Activated naive CD4-positive, alpha-beta T cell treated with anti-CD3 and anti-CD28 coated beads, Interleukin-2, amount 10 ng/mL, durations not matched to agents 7 days and 5 days (primary cell): ENCODE measurements at regions of chr9 and their contacts with region 1.

Region 1: GRCh38 chr9:87324613-87325194 is 173.0 kb upstream of the DAPK1 start:
- DNase-seq: no peak
- H3K4me3 Mint-ChIP-seq: no peak overlapping the region
- H3K27ac Mint-ChIP-seq: no peak overlapping the region
- H3K4me1 Mint-ChIP-seq: no peaks in the 10 kb centered on the region
- H3K27me3 Mint-ChIP-seq: peaks cover 6% of the 10 kb centered on the region

Region 2: DNA sequence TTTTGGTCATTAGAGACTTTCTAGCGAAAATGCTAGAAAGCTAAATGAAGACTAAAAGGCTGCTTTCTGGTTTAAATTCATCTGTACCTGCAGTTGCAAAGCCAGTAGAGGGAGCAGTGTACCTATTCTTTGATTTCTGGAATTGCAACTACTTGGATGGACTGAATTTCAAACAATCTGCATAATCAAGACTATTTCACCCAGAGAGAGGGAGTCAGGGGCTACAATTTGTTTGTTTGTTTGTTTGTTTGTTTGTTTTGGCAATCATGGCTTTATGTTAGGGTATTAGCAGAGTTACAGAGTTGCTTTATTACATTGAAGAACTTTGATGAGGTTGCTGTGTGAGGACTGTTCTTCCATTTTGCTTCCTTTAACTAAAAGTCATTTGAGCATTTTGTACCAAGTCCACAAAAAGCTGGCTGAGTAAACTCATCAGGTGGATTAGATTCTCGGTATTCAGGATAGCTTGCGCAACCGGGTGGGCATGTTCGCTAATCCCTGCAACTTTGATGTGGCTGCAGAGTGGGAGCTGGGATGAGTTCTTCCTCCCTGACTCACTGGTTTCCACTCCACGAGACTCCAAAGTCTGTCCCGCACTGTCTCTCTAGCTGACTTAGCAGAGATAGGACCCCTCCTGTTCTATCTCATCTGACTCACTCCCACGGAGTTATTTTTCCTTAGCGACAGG is 890.5 kb before region 1 on chr9:
- CTCF ChIA-PET with region 1: interaction called, 16 read pairs
- DNase-seq: no peak
- H3K4me3 Mint-ChIP-seq: no peak overlapping the region
- H3K27ac Mint-ChIP-seq: no peak overlapping the region
- H3K4me1 Mint-ChIP-seq: no peaks in the 10 kb centered on the region
- H3K27me3 Mint-ChIP-seq: no peaks in the 10 kb centered on the region

Region 3: DNA sequence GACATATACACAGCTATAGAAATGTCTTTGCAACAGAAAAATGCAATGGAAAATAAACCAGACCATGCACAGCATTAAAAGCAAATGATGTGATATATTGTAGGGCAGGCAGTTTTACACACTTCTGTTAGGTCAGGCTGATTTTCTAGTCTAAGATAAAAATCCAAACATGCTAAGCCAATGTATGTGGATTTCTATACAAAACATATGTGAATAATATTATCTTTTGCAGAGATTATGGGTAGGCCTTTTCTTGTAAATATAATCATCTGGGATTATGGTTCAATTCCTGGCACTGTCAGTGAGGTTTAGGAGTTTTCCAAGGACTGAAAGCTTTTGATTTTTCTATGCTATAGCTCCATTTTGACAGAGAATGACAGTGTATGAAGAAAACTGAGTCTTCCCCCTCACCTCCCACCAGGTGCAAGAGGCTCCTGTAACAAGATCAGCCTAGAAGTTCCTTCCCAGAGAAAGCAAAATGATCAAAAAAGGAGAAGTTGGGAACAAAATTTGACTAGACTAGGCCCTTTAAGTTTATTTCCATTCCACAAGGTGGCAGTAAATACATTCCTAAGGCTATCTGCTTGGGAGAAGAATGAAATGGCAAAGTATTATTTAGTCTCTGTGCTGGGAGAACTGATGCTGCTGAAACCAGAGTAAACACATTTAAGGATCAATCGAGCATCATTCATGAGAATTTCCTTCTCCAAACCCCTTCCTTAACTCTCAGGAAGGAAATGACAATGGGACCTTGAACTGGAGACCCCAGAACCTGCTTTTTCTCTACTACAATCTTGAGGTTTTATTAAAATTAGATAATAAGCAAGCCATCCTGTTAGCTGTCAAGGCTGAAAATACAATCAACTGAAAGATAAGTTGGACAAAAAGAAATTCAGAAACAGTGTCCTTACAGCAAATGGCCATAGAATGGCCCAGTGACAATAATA is 837.5 kb before region 1 on chr9:
- CTCF ChIA-PET with region 1: interaction called, 11 read pairs
- DNase-seq: no peak
- H3K4me3 Mint-ChIP-seq: no peak overlapping the region
- H3K27ac Mint-ChIP-seq: no peak overlapping the region
- H3K4me1 Mint-ChIP-seq: peaks cover 8% of the 10 kb centered on the region
- H3K27me3 Mint-ChIP-seq: peaks cover 4% of the 10 kb centered on the region

Region 4: GRCh38 chr9:86637515-86637914 is 687.2 kb before region 1 on chr9:
- CTCF ChIA-PET with region 1: interaction called, 13 read pairs
- DNase-seq: no peak
- H3K4me3 Mint-ChIP-seq: no peak overlapping the region
- H3K27ac Mint-ChIP-seq: no peak overlapping the region
- H3K4me1 Mint-ChIP-seq: no peaks in the 10 kb centered on the region
- H3K27me3 Mint-ChIP-seq: peaks cover 3% of the 10 kb centered on the region